GM10248 (cell line): ENCODE measurements at regions of chr2 and their contacts with region 1.

Region 1: GRCh38 chr2:207503234-207503633 is 26.5 kb upstream of the CREB1 start:
- DNase-seq: peak; percentile 56
- CTCF ChIP-seq: no peak

Region 2: DNA sequence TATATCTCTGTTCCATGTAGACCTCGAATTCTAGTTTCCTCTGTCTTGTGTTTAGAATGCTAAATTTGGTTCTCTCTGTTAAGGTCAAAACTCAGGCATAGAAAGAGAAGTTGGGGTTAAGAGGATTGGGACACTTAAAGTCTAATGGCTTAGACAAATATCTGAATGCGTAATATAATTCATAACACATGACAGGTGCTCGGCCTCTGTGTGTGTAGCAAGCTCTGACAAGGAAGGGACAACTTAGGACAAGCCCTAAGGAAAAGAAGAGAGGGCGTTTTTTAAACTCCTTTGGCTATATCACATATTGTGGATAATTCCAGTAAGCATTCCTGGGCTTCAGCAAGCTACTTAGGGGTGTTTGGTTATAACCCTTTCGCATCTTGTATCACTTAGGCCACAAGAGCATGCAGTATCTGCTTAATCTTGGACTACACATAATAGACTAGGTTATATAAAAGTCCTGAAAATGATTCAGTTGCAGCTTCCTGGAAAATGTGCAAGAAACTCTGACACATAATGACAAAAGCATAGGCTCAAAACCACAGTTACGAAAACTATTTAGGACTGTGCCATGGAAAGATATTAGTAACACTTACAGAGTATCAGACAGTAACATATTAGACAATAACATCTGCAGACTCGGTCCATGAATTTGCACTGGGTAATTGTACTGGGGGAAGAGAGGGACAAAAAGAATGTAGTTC is 10.5 kb after region 1 on chr2:
- CTCF ChIA-PET with region 1: interaction called, 20 read pairs
- POLR2A ChIA-PET with region 1: no interaction called
- DNase-seq: no peak
- CTCF ChIP-seq: no peak